ENCODE measurements at regions of chr14 and their contacts with region 1.

Region 1: DNA sequence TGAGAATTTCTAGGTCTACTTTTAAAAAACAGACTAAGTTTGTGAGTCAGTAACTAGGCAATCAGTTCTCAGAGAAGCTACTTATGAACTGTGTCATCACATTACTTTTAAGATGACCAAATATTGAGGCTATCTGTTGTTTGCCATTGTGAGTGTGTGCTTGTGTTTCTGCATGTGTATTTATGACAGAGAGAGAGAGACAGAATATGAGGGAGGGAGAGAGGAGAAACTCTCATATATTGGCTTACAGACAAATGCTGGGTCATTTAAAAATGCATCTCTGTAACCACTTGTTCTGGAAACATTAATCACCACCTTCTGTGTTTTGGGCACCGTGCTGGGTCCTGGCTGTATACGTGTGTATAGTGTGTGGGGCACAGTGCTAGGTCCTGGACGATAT is 161.5 kb upstream of the FRMD6 start:
- DNase-seq: peak; percentile 54
- H3K4me3 Mint-ChIP-seq: peak overlapping the region; percentile 76
- H3K27ac Mint-ChIP-seq: peak overlapping the region; percentile 70
- H3K4me1 Mint-ChIP-seq: peaks cover 44% of the 10 kb centered on the region
- H3K27me3 Mint-ChIP-seq: no peaks in the 10 kb centered on the region
- CTCF ChIP-seq: no peak

Region 2: DNA sequence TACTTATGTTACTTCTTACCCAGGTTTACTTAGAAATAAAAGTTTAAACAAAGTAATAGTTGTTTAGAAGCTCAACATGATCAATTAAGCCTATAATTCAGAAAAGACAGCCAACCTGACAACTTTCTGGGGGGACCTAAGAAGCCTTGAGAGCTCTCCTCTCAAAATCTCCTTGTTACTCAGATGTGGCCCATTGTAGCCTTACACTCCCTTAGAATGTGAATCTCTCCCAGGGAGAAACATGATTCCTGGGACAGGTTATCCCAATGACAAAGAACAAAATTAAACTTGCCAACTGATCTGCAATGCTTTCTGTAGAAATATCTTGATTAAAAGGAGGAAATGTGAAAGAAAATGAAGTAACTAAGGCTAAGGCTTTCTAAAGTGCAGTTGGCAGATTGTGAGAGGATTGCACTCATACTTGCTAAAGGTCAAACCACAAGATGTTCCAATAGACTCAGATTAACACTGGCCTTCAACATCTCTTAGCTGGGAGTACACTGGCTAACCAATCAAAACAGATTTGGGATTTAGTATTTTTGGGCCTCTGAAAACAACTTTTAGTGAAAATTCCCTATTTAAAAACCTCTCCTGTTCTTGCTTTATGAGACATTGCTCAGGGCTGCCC is 322.5 kb before region 1 on chr14:
- CTCF ChIA-PET with region 1: no interaction called
- POLR2A ChIA-PET with region 1: no interaction called
- intact Hi-C with region 1: no loop called
- DNase-seq: peak; percentile 39
- H3K4me3 Mint-ChIP-seq: no peak overlapping the region
- H3K27ac Mint-ChIP-seq: no peak overlapping the region
- H3K4me1 Mint-ChIP-seq: peaks cover 11% of the 10 kb centered on the region
- H3K27me3 Mint-ChIP-seq: no peaks in the 10 kb centered on the region
- CTCF ChIP-seq: no peak

Region 3: GRCh38 chr14:51239813-51240803 is 250.1 kb before region 1 on chr14 and contains the start of gene TMX1:
- CTCF ChIA-PET with region 1: no interaction called
- POLR2A ChIA-PET with region 1: no interaction called
- intact Hi-C with region 1: no loop called
- DNase-seq: peak; percentile 99
- H3K4me3 Mint-ChIP-seq: no peak within 1 kb of the TSS
- H3K27ac Mint-ChIP-seq: no peak within 1 kb of the TSS
- H3K4me1 Mint-ChIP-seq: peaks cover 20% of the 10 kb centered on the region
- H3K27me3 Mint-ChIP-seq: no peaks in the 10 kb centered on the region
- CTCF ChIP-seq: no peak
- total RNA-seq, gene TMX1: 31.9 and 35.0 TPM in 2 replicates

Region 4: DNA sequence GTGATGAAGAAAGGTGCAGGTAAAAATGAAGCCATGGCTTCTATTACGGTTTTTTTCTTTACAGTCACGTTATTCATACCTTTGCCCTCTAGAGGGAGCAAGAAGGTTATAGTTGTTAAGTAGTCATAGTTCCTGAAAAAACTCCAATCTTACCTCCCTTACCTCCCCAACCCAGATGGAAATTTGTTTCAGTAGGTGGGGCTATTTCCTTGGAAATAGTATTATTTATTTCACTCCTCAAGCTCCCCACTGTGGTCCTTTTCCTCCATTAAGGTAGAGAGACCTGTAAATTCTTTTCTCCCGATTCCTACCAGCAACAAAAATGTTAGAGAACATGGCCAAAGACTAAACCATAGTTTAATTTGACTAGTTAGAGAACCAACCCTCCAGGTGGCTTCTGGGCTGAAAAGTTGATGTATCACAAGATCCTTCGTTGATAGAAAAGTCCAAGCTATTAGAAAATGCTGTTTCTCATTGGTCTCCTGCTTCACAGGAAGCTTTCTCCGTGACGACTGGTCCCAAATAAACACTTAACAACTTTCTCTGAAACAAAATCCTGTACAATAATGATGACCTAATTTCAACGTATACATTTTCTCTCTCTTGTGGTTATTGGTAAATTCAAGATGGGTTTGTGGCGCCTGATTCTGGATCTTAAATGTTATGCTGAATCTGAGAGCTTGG is 206.7 kb before region 1 on chr14:
- CTCF ChIA-PET with region 1: interaction called, 5 read pairs
- POLR2A ChIA-PET with region 1: interaction called, 4 read pairs
- intact Hi-C with region 1: loop called (anchors 5 kb)
- DNase-seq: peak; percentile 84
- H3K4me3 Mint-ChIP-seq: no peak overlapping the region
- H3K27ac Mint-ChIP-seq: no peak overlapping the region
- H3K4me1 Mint-ChIP-seq: peaks cover 12% of the 10 kb centered on the region
- H3K27me3 Mint-ChIP-seq: no peaks in the 10 kb centered on the region
- CTCF ChIP-seq: peak; percentile 80

Region 5: DNA sequence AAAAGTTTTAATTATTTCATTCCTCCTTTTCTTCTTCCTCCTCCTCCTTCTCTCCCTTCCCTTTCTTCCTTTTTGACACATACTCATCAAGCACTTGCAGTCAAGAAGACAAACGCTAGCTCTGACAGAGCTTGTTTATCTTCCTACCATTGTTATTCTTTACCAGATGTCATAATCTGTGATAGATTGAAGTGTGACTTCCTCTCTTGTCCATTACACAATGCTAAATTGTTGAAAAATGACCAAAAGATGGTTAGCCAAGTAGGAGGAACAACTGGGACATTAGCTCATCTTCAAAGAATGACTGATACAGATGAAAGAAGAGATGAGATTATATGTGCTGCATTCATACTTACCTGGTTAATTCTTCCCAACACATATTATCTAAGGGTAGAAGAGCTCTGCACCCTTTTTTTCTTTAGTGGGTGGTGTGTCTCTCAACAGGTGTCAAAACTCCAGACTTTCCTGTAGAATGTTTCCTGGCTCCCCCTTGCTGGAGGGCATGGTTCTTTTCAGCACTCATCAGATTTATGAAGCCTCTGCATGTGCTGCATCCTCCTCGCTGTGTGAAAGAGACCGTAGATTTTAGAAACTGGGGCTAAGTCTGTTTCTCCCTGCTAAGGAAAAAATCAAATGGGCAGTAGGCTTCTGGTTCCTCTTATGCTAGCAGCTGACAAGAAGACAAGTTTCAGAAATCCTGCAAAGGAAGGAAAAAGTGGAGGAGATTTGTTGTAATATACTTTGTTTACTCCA is 103.0 kb before region 1 on chr14:
- CTCF ChIA-PET with region 1: interaction called, 3 read pairs
- POLR2A ChIA-PET with region 1: interaction called, 39 read pairs
- intact Hi-C with region 1: no loop called
- DNase-seq: peak; percentile 50
- H3K4me3 Mint-ChIP-seq: no peak overlapping the region
- H3K27ac Mint-ChIP-seq: peak overlapping the region; percentile 1
- H3K4me1 Mint-ChIP-seq: peaks cover 23% of the 10 kb centered on the region
- H3K27me3 Mint-ChIP-seq: no peaks in the 10 kb centered on the region
- CTCF ChIP-seq: no peak

Region 6: DNA sequence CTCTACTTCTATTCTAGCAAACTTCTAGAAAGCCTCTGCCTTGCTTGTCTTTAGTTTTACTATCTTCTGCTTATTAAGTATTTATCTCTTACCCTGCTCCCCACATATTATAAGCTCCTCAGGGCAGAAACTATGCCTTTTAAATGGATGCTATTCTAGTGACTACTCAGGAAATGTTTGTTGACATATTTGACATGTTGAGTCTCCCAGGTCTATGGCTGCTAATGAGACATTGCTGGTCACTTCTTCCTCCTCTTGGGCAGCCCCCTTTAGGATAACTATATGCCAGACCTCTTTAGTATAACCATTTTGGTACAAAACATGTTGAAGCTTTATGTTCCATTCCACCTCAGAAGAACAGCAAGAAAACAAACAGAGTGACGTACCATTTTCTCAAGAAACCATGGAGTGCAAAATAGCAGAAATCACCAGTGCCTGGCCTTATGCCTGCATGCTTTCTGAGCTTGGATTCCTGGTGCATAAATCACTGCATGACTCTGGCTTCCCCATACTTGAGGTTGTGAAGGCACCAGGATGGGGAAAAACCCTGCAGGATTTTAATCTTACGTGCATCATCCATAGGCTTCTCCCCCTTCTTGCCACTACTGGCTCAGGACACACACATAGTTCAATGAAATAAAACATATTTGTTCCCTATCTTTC is 47.6 kb before region 1 on chr14:
- CTCF ChIA-PET with region 1: no interaction called
- POLR2A ChIA-PET with region 1: interaction called, 17 read pairs
- intact Hi-C with region 1: loop called (anchors 5 kb)
- DNase-seq: peak; percentile 85
- H3K4me3 Mint-ChIP-seq: peak overlapping the region; percentile 1
- H3K27ac Mint-ChIP-seq: peak overlapping the region; percentile 90
- H3K4me1 Mint-ChIP-seq: peaks cover 32% of the 10 kb centered on the region
- H3K27me3 Mint-ChIP-seq: no peaks in the 10 kb centered on the region
- CTCF ChIP-seq: no peak

Region 7: DNA sequence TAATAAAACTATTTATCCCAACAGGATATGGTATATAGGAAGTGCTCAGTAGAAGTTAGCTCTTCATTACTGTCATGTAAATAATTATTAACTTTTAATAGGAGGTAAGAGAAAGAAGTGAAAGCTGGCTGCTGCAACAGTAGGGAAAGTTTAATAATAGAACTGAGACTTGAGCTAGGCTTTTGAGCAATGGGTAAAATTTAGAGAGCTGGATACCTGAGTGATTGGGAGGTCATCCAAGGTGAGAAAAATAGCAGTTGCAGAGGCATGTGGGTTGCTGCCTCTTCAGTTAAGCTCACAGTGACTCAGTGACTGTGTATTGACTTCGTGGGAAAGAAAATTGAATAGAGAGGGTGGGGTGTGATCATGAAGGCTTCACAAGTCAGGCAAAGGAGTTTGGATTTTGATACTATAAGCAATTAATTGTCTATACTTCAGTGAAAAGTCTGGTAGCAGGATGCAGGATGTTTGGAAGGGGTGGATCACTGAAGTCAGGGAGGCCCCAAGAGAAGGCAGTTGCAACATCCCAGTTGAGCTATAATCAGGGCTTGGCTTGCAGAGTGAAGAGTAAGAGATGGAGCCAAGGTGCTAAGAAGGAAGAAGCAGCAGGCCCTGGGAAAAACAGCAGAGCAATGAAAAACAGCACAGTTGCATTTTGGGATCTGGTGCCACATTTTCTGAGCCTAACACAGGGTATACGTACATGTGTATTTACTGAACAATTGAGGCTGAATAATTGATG is 10.4 kb before region 1 on chr14:
- CTCF ChIA-PET with region 1: interaction called, 3 read pairs
- POLR2A ChIA-PET with region 1: interaction called, 23 read pairs
- intact Hi-C with region 1: no loop called
- DNase-seq: peak; percentile 17
- H3K4me3 Mint-ChIP-seq: no peak overlapping the region
- H3K27ac Mint-ChIP-seq: no peak overlapping the region
- H3K4me1 Mint-ChIP-seq: peaks cover 2% of the 10 kb centered on the region
- H3K27me3 Mint-ChIP-seq: no peaks in the 10 kb centered on the region
- CTCF ChIP-seq: no peak

Region 8: DNA sequence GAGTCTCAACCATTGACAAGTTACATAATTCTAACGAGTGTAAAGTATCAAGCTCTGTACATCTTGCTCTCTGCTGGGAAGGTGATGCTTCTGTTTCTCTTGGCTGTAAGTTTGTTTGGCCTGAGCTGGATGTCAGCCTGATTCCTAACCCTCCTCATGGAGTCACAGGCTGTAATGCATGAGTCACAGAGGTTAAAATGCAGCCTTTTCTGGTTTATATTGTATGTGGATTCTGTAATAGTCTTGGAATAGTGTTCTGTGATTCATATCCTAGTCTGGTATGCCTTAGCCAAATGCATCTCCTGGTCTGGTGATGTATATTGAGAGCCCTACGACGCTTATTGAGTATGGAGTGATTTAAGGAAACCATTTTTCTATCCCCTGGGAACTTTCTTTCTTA is 57.1 kb after region 1 on chr14:
- CTCF ChIA-PET with region 1: interaction called, 3 read pairs
- POLR2A ChIA-PET with region 1: interaction called, 113 read pairs
- intact Hi-C with region 1: loop called (anchors 2 kb)
- DNase-seq: peak; percentile 99
- H3K4me3 Mint-ChIP-seq: peak overlapping the region; percentile 46
- H3K27ac Mint-ChIP-seq: peak overlapping the region; percentile 94
- H3K4me1 Mint-ChIP-seq: peaks cover 45% of the 10 kb centered on the region
- H3K27me3 Mint-ChIP-seq: no peaks in the 10 kb centered on the region
- CTCF ChIP-seq: no peak

Region 9: GRCh38 chr14:51651388-51652167 is 161.4 kb after region 1 on chr14 and contains the start of gene FRMD6:
- CTCF ChIA-PET with region 1: no interaction called
- POLR2A ChIA-PET with region 1: interaction called, 55 read pairs
- intact Hi-C with region 1: loop called (anchors 2 kb)
- DNase-seq: peak; percentile 87
- H3K4me3 Mint-ChIP-seq: peak within 1 kb of the TSS; percentile 77
- H3K27ac Mint-ChIP-seq: peak within 1 kb of the TSS; percentile 77
- H3K4me1 Mint-ChIP-seq: peaks cover 36% of the 10 kb centered on the region
- H3K27me3 Mint-ChIP-seq: no peaks in the 10 kb centered on the region
- CTCF ChIP-seq: peak; percentile 90
- total RNA-seq, gene FRMD6: 104 and 135 TPM in 2 replicates

Region 10: GRCh38 chr14:51821822-51822221 is 331.6 kb after region 1 on chr14:
- CTCF ChIA-PET with region 1: no interaction called
- POLR2A ChIA-PET with region 1: no interaction called
- intact Hi-C with region 1: no loop called
- DNase-seq: no peak
- H3K4me3 Mint-ChIP-seq: no peak overlapping the region
- H3K27ac Mint-ChIP-seq: no peak overlapping the region
- H3K4me1 Mint-ChIP-seq: peaks cover 14% of the 10 kb centered on the region
- H3K27me3 Mint-ChIP-seq: peaks cover 35% of the 10 kb centered on the region
- CTCF ChIP-seq: no peak

Region 11: DNA sequence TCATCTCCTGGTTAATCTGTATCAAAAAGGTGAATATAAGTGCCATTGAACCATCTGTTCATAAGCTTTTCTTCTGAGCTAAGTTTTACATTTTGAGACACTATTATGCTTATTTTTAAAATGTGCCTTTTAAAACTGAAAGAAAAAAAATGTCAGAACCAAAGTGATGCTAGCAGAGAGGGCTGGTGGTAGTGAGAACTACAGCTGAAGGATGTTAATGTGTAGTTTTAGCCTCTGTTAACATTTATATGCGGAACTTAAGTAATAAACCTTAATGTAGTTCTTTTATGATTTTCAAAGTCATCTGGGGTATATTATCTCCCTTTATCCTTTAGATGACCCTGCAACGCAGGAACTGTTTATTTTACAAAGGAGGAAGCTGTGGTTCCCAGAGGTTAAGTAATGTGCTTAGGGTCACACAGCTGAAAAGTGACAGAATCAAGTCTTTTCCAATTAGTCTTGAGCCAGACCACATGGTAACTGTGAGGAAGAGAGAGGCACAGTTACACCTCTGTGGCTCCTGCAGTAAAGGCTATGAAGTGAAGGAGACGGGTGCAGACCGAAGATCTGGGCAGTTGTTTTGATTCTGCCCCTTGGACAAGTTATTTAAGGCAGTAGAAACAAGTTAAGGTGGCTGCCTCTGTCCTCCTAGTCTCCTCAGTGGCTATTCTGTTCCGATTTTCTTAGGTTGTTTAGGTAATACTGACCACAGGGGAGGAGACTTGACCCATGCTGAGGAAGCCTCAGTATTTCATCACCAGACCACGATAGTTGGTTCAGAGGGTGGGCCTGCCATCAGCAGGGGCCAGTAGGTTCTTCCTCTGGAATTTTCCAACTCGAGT is 394.1 kb after region 1 on chr14:
- CTCF ChIA-PET with region 1: no interaction called
- POLR2A ChIA-PET with region 1: no interaction called
- intact Hi-C with region 1: no loop called
- DNase-seq: no peak
- H3K4me3 Mint-ChIP-seq: no peak overlapping the region
- H3K27ac Mint-ChIP-seq: no peak overlapping the region
- H3K4me1 Mint-ChIP-seq: no peaks in the 10 kb centered on the region
- H3K27me3 Mint-ChIP-seq: no peaks in the 10 kb centered on the region
- CTCF ChIP-seq: no peak